Mammary epithelial cell (primary cell): ENCODE measurements at regions of chr4 and their contacts with region 1.

Region 1: GRCh38 chr4:106266201-106266600 is 49.8 kb downstream of the TBCK start:
- DNase-seq: peak; percentile 37
- H3K4me3 ChIP-seq: no peak overlapping the region
- H3K27ac ChIP-seq: no peak overlapping the region
- H3K4me1 ChIP-seq: no peaks in the 10 kb centered on the region
- H3K27me3 ChIP-seq: no peaks in the 10 kb centered on the region
- CTCF ChIP-seq: peak; percentile 55 to 67

Region 2: GRCh38 chr4:106315968-106316772 is 50.0 kb after region 1 on chr4 and contains the starts of genes AIMP1 and TBCK:
- CTCF ChIA-PET with region 1: no interaction called
- dilution Hi-C with region 1: no loop called
- in situ Hi-C with region 1: no loop called
- intact Hi-C with region 1: loop called (anchors 1 kb)
- DNase-seq: peak; percentile 85
- H3K4me3 ChIP-seq: peak within 1 kb of the TSS; percentile 80 to 91 (median 88)
- H3K27ac ChIP-seq: peak within 1 kb of the TSS; percentile 98
- H3K4me1 ChIP-seq: peaks cover 15% of the 10 kb centered on the region
- H3K27me3 ChIP-seq: no peaks in the 10 kb centered on the region
- CTCF ChIP-seq: no peak
- total RNA-seq, gene AIMP1: 17.7 to 56.0 TPM
- total RNA-seq, gene TBCK: 28.0 to 45.3 TPM

Region 3: DNA sequence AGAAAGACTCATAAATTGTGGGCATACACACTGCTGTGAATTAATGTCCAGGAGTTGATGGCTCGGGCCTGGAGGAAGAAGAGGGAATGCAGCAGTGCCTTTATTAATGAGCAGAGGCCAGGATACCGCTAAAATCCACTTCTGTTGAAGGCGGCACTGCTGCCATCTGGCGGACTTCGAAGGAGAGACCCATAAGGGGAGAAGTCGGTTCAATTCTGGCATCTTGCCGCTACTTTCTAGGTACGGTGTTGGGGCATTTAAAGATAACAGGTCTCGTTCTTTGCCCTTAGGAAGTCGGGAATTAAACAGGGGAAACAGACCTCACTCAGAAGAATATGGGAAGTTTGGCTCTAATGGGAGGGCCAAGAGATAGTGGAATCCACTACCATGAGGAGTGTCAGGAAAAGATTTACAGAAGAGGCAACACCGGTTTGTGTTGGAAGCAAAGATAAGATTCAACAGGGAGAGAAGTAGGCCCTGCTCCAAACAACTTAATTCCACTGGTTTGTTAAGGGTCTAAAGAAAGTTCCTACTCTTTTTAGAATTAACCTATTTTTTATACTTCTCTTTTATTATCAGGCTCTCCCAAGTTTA is 236.0 kb after region 1 on chr4:
- CTCF ChIA-PET with region 1: no interaction called
- dilution Hi-C with region 1: no loop called
- in situ Hi-C with region 1: no loop called
- intact Hi-C with region 1: loop called (anchors 1 kb)
- DNase-seq: peak; percentile 52
- H3K4me3 ChIP-seq: no peak overlapping the region
- H3K27ac ChIP-seq: no peak overlapping the region
- H3K4me1 ChIP-seq: no peaks in the 10 kb centered on the region
- H3K27me3 ChIP-seq: no peaks in the 10 kb centered on the region
- CTCF ChIP-seq: peak; percentile 65 to 87

Region 4: GRCh38 chr4:106809076-106809475 is 542.9 kb after region 1 on chr4:
- CTCF ChIA-PET with region 1: no interaction called
- dilution Hi-C with region 1: no loop called
- in situ Hi-C with region 1: no loop called
- intact Hi-C with region 1: loop called (anchors 1 kb)
- DNase-seq: peak; percentile 48
- H3K4me3 ChIP-seq: no peak overlapping the region
- H3K27ac ChIP-seq: no peak overlapping the region
- H3K4me1 ChIP-seq: no peaks in the 10 kb centered on the region
- H3K27me3 ChIP-seq: no peaks in the 10 kb centered on the region
- CTCF ChIP-seq: peak; percentile 50 to 71